Head of caudate nucleus (tissue), 42 donors: ENCODE measurements at regions of chr22 and their contacts with region 1.

Region 1: GRCh38 chr22:45994491-45995404 is 17.8 kb upstream of the WNT7B start:
- DNase-seq: peak; percentile 71 to 97 (median 89)

Region 2: GRCh38 chr22:46239261-46240048 is 244.7 kb after region 1 on chr22:
- intact Hi-C with region 1: no loop called
- DNase-seq: peak in 1 of 42 donors; percentile 12

Region 3: DNA sequence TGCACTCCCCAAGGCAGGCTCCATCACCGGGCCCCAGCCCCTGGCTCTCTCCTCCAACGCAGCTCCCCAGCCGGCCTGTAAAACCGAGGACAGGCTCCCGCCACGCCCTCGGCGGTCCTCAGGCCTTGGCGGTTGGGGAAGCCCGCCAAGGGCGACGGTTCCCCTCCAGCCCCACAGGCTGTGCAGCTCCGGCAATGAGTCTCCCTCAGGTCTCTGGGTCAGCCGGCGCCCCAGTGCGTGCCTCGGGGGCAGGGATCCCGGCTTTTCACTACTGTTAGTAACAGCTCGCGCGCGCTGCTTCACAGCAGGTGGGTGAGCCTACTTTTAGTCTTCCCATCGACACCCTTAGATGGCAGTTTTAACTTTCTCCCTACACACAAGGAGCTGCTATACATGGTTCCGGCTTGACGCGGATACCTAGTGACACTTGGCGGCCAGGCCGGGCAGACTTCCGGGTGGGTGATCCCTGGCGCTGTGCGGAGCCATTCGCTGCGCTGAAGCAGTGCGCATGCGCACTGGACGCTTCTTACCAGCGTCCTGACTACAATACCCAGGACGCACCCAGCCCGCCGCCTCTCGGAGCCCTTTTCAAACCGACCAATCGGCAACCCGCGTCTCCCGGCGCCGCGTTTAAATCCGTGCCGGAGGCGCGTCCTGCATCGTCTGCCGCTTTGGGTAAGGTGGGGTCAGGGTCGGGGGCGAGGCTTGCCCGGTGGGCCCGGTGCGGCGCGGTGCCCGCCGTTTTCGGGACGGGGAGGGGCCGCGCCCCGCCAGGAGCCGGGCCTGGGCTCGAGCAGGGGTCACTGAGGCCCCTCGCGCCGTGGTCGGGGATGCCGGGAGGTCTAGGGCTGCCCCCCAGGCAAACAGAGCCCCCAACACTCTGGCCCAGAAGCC is 301.8 kb after region 1 on chr22 and contains the start of gene GTSE1:
- intact Hi-C with region 1: loop called (anchors 10 kb)
- DNase-seq: peak; percentile 96 to 99 (median 98)

Region 4: DNA sequence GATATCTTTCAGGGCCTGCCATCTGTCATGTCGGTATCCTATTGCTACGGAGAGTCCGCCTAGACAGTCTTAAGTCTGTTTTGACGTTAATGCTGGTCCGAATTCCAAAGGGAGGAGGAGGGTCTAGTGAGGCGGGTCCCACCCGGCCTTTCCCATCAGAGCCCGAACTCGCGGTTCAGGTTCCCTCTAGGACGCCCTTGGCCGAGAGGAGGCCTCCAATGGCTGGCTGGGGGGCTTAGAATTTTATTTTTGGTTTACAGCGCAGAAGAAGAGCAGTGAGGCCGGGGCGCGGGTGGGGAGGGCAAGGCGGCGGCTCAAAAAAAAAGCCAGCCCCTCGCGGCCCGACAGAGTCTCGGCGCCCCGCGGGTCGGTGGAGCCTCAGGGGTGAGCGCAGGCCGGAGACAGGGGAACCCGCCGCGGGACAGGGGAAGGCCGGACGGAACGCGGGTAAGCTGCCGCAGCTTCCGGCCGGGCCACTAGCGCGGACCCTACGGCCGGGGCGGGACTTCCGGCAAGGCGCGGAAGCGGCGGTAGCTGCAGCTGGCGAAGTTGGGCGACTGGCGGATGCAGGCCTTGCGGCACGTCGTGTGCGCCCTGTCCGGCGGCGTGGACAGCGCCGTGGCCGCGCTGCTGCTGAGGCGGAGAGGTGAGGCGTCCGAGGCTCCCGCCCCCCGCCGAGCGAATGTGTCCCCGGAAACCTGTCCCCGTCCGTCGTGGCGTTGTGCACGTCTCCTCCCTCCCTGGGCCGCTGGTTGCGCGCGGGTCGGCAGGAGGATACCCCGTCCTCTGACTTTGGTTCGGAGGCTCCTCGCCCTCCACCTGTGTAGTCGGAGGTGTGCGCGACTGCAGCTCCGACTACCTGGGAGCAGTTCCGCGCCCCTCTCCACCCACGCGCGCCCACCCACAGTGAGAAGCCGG is 340.7 kb after region 1 on chr22 and contains the start of gene TRMU:
- intact Hi-C with region 1: loop called (anchors 10 kb)
- DNase-seq: peak; percentile 49 to 95 (median 87)